CD14-positive monocyte (primary cell): ENCODE measurements at regions of chr3 and their contacts with region 1.

Region 1: DNA sequence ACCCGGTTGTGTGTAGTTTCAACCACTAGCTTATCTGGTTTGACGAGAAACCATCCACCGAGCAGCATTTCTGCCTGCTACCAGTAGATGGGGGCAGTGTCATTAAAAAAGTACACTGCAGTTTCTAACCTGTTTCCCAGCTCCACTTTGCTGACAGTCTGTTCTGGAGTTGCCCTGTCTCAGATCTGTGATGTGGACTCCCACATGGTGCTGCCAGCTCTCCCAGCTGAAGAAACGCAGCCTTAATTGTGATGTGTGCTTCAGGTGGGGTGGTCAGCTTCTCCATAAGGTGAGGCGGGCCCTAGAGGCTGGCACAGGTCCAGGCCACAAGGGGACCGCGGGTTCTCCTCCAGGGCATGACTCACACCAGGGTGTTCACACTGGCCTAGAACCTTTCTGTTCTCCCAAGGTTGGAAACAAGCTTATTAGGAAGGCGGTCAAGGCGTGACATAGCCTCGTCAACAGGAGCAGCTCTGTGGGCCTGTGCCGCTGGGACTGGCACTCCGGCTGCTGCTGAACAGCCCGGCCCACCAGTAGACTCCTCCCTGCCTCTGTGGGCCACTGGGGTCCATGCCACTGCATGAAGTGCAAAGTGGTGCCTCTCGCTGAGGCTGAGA is 2.9 kb upstream of the FAM43A start:
- DNase-seq: peak; percentile 63 to 79 (median 68)
- H3K4me3 ChIP-seq: no peak overlapping the region
- H3K4me3 Mint-ChIP-seq: peak overlapping the region; percentile 57 to 59
- H3K27ac ChIP-seq: peak overlapping the region in 1 of 2 donors; percentile 1
- H3K27ac Mint-ChIP-seq: peak overlapping the region in 6 of 7 donors; percentile 24 to 86 (median 68)
- H3K4me1 ChIP-seq: peaks cover 29 to 40% of the 10 kb centered on the region in 2 donors
- H3K4me1 Mint-ChIP-seq: peaks cover 34% of the 10 kb centered on the region
- H3K27me3 ChIP-seq: no peaks in the 10 kb centered on the region
- H3K27me3 Mint-ChIP-seq: peaks cover 2 to 4% (median 2%) of the 10 kb centered on the region in 3 donors
- CTCF ChIP-seq: peak; percentile 87

Region 2: DNA sequence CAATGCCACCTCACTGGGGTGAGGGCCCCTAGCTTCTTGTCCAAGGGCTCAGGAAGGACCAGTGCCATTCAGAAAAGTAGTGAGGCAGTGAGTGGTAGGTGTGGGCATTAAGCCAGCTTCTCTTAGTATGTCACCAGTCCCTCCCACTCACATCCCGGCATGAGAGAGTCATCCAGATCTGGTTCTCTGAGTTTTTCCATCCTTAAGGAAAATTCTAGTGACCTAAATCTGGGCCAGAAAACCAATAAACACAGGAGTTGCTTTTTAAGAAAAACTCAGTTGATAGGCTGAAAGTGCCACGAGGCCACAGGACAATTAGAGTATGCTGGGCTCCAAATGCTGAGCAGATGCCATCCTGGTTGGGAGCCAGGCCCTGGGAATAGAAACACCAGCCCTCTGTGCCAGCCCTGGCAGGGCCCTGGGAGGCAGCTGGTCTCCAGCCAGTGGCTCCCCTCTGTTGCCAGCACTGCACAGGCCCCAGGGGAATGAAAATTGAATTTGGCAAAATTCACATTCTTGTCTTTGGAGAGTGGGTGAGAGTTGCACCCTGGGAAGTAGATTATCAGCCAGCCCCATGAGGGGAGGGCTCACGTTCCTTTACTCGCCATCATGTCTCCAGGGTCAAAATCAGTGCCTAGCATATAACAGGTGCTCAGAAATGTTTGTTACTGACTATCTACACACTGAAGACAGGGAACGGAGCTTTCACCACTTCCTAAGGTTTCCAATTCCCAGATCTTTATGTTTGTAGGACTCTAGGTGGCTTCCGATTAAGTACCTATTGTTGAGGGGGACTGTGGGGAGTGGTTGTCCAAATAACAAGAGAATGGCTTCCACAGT is 55.7 kb after region 1 on chr3:
- intact Hi-C with region 1: loop called in 1 of 2 experiments (anchors 5 kb)
- DNase-seq: no peak
- H3K4me3 ChIP-seq: no peak overlapping the region
- H3K4me3 Mint-ChIP-seq: no peak overlapping the region
- H3K27ac ChIP-seq: peak overlapping the region; percentile 22 to 88
- H3K27ac Mint-ChIP-seq: peak overlapping the region in 3 of 7 donors; percentile 9 to 50 (median 46)
- H3K4me1 ChIP-seq: peaks cover 9 to 11% of the 10 kb centered on the region in 2 donors
- H3K4me1 Mint-ChIP-seq: no peaks in the 10 kb centered on the region
- H3K27me3 ChIP-seq: no peaks in the 10 kb centered on the region
- H3K27me3 Mint-ChIP-seq: peaks cover 0 to 1% (median 0%) of the 10 kb centered on the region in 3 donors
- CTCF ChIP-seq: no peak

Region 3: GRCh38 chr3:194852825-194853537 is 170.2 kb after region 1 on chr3:
- intact Hi-C with region 1: loop called in 1 of 2 experiments (anchors 10 kb)
- DNase-seq: no peak
- H3K4me3 ChIP-seq: no peak overlapping the region
- H3K4me3 Mint-ChIP-seq: no peak overlapping the region
- H3K27ac ChIP-seq: no peak overlapping the region
- H3K27ac Mint-ChIP-seq: peak overlapping the region in 1 of 7 donors; percentile 42
- H3K4me1 ChIP-seq: peaks cover 17 to 19% of the 10 kb centered on the region in 2 donors
- H3K4me1 Mint-ChIP-seq: peaks cover 21% of the 10 kb centered on the region
- H3K27me3 ChIP-seq: no peaks in the 10 kb centered on the region
- H3K27me3 Mint-ChIP-seq: peaks cover 0 to 5% (median 3%) of the 10 kb centered on the region in 3 donors
- CTCF ChIP-seq: no peak

Region 4: GRCh38 chr3:194861375-194861774 is 178.6 kb after region 1 on chr3:
- intact Hi-C with region 1: loop called (anchors 5 to 10 kb)
- DNase-seq: peak; percentile 55 to 60 (median 56)
- H3K4me3 ChIP-seq: no peak overlapping the region
- H3K4me3 Mint-ChIP-seq: peak overlapping the region in 1 of 2 donors; percentile 15
- H3K27ac ChIP-seq: peak overlapping the region in 1 of 2 donors; percentile 11
- H3K27ac Mint-ChIP-seq: peak overlapping the region in 3 of 7 donors; percentile 51 to 68 (median 68)
- H3K4me1 ChIP-seq: peaks cover 31 to 32% of the 10 kb centered on the region in 2 donors
- H3K4me1 Mint-ChIP-seq: peaks cover 35% of the 10 kb centered on the region
- H3K27me3 ChIP-seq: no peaks in the 10 kb centered on the region
- H3K27me3 Mint-ChIP-seq: peaks cover 1 to 2% (median 2%) of the 10 kb centered on the region in 3 donors
- CTCF ChIP-seq: no peak

Region 5: DNA sequence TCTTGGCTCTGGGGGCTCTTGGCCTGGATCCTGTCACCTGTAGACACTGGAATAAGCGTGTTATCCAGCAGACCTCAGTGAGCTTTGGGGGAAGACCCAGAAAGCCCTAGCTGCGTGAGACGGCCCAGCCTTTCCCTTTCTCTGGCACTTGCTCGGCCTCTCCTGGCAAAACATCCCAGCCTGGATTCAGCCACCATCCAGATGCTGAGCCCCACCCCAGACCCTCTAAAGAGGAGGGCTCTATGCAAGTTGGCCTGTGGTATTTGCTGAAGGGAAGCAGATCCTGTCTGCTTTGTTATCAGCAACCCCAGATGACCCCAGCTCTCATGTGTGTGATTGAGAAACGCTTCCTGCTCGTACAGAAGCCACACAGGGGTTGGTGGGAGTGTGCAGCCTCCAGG is 270.0 kb after region 1 on chr3:
- intact Hi-C with region 1: loop called (anchors 5 to 10 kb)
- DNase-seq: no peak
- H3K4me3 ChIP-seq: no peak overlapping the region
- H3K4me3 Mint-ChIP-seq: no peak overlapping the region
- H3K27ac ChIP-seq: no peak overlapping the region
- H3K27ac Mint-ChIP-seq: no peak overlapping the region
- H3K4me1 ChIP-seq: peaks cover 6 to 11% of the 10 kb centered on the region in 2 donors
- H3K4me1 Mint-ChIP-seq: peaks cover 21% of the 10 kb centered on the region
- H3K27me3 ChIP-seq: no peaks in the 10 kb centered on the region
- H3K27me3 Mint-ChIP-seq: peaks cover 0 to 6% (median 4%) of the 10 kb centered on the region in 3 donors
- CTCF ChIP-seq: no peak

Region 6: DNA sequence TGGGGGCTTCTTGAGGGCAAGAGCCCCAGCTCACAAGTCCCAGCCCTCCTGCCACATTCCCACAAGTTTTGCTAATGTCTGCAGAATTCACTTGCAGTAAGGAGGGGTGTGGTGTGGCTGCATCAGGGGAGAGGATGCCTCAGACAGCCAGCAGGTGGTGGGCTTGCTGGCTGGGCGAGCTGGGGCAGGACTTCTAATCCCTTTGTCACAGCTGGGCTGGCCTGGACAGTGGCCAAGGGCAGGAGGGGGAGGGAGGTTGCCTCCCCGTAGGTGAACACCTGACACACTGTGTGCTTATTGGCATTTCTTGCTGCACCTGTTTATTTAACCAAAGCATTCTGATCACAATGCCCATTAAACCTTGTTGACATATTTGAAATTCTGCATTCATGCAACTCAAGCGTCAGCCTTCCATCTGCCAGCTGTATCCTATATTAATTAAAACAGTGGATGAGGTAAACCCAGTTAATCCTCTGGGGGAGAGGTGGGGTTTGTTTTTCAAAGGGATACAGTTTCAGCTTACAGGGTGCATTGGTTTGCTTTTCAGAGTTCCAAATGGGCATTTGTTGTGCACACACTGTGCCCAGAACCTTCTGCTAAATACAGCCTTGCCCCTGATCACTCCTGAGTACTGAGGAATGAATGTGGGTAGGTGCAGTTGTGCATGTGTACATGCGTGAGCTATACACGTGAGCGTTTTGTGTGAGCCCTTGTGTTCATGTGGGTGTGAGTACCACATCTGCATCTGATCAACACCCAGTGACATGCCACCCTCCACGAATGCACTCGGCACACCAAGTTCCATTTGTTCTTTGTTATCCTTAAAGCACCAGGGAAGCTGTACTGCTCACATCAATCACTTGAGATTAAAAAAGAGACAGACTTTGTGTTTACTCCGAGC is 319.4 kb after region 1 on chr3:
- intact Hi-C with region 1: loop called in 1 of 2 experiments (anchors 10 kb)
- DNase-seq: peak; percentile 29 to 48 (median 41)
- H3K4me3 ChIP-seq: peak overlapping the region in 1 of 3 experiments; percentile 41
- H3K4me3 Mint-ChIP-seq: peak overlapping the region in 1 of 2 donors; percentile 81
- H3K27ac ChIP-seq: peak overlapping the region in 1 of 2 donors; percentile 80
- H3K27ac Mint-ChIP-seq: peak overlapping the region; percentile 84 to 93 (median 86)
- H3K4me1 ChIP-seq: peaks cover 60 to 71% of the 10 kb centered on the region in 2 donors
- H3K4me1 Mint-ChIP-seq: peaks cover 75% of the 10 kb centered on the region
- H3K27me3 ChIP-seq: no peaks in the 10 kb centered on the region
- H3K27me3 Mint-ChIP-seq: peaks cover 0 to 5% (median 0%) of the 10 kb centered on the region in 3 donors
- CTCF ChIP-seq: peak; percentile 60

Region 7: DNA sequence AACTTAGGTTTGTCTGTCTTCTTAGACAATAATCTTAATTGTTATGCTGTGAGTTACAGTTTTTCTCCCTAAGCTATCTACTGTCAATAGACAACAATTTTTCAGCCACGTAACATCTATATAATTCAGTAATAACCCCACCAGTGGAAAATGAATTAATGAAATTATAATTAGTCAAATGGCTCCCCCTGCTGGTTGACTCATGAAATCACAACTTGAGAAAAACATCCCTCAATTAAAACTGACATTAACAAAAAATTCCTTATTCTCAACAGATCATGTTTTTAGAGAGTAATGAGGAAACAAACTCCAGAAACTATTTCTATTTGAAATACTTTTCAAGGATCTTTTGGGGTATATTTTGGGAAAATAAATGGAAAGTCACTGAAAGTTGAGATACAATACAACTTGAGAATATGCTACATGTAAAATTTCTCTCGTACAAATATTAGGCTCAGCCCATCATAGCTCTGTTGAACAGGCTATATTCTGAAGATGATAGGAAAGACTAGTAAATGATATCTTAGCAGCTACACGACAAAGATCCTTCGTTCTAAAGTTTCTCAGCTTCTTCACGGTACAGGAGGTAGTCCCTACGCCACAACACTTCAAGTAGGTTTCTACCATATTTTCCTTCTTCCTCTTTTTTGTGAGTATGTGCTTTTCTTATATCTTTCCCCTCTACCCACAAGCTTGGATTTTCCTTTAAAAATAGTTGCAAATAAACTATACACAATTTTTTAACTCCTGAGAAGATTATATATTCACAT is 839.6 kb after region 1 on chr3:
- intact Hi-C with region 1: loop called (anchors 10 kb)
- DNase-seq: peak in 2 of 3 donors; percentile 32 to 60
- H3K4me3 ChIP-seq: no peak overlapping the region
- H3K4me3 Mint-ChIP-seq: no peak overlapping the region
- H3K27ac ChIP-seq: no peak overlapping the region
- H3K27ac Mint-ChIP-seq: peak overlapping the region in 2 of 7 donors; percentile 13 to 31
- H3K4me1 ChIP-seq: no peaks in the 10 kb centered on the region
- H3K4me1 Mint-ChIP-seq: peaks cover 4% of the 10 kb centered on the region
- H3K27me3 ChIP-seq: no peaks in the 10 kb centered on the region
- H3K27me3 Mint-ChIP-seq: no peaks in the 10 kb centered on the region
- CTCF ChIP-seq: peak; percentile 81